PC-9 (cell line): ENCODE measurements at regions of chr11 and their contacts with region 1.

Region 1: DNA sequence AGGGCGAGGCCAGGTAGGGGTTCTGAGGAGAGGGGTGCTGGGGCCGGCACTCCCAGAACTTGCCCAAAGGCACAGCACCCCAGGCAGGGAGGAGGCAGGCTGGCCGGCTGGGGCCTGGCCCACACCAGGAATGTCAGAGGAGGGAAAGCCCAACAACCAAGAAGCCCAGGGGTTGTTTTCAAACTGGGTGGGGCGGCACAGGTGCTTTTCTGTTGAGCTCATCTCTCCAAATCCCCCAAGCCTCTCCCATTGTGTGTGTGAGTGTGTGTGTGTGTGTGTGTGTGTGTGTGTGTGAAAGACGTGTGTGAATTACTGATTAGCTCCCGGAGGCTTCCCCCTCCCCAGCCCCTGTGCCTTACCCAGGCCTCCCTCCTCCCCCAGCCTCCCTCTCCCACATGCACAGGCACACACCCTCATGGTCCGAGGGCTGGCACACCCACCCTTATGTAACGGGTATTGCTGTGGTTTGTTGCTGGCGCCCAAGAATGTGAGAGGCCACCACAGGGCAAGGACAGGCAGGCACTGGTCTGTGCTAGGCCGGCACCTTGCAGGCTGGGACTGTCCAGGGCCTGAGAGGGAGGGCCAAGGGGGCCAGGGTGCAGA is 15.9 kb downstream of the TRIM29 start:
- DNase-seq: peak; percentile 91 to 98
- H3K4me3 ChIP-seq: peak overlapping the region; percentile 47
- H3K27ac ChIP-seq: peak overlapping the region; percentile 98
- H3K4me1 ChIP-seq: peaks cover 61% of the 10 kb centered on the region
- H3K27me3 ChIP-seq: no peaks in the 10 kb centered on the region
- CTCF ChIP-seq: no peak

Region 2: DNA sequence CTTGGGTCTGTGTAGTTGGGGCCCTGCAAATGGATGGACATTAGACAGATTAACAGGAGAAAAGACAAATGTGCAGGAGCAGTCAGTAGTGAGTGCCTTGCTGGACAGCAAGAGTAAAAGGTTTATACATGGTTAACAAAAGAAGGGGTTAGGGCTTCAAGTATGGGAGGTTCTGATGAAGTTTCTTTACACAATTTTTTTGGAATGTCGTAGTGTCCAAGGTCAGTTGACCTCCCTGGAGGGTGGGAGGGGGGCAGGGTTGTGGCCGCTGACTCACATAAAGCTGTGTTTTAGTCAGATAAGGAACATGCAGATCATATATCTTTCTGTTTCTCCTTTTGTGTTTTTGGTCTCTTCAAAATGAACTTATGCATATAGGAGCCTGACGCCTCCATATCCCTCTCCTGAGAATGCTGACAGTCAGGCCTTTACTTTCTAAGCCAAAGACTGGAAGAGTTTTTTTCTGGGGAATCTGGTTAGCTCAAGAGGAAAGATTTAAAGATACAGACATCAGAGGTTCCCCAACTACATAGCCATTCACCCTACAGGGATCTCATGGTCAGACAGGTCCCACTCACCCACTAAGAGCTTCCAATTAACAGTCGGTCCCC is 527.2 kb before region 1 on chr11:
- CTCF ChIA-PET with region 1: no interaction called
- POLR2A ChIA-PET with region 1: no interaction called
- intact Hi-C with region 1: loop called (anchors 5 kb)
- DNase-seq: peak; percentile 63 to 86
- H3K4me3 ChIP-seq: no peak overlapping the region
- H3K27ac ChIP-seq: peak overlapping the region; percentile 78
- H3K4me1 ChIP-seq: peaks cover 57% of the 10 kb centered on the region
- H3K27me3 ChIP-seq: no peaks in the 10 kb centered on the region
- CTCF ChIP-seq: no peak

Region 3: GRCh38 chr11:119684361-119685110 is 437.4 kb before region 1 on chr11:
- CTCF ChIA-PET with region 1: no interaction called
- POLR2A ChIA-PET with region 1: no interaction called
- intact Hi-C with region 1: loop called (anchors 5 kb)
- DNase-seq: peak; percentile 60 to 83
- H3K4me3 ChIP-seq: peak overlapping the region; percentile 32; the same call in 1 of the 2 replicates
- H3K27ac ChIP-seq: peak overlapping the region; percentile 92
- H3K4me1 ChIP-seq: peaks cover 62% of the 10 kb centered on the region
- H3K27me3 ChIP-seq: no peaks in the 10 kb centered on the region
- CTCF ChIP-seq: no peak

Region 4: GRCh38 chr11:120210626-120211521 is 88.9 kb after region 1 on chr11 and contains the start of gene OAF:
- CTCF ChIA-PET with region 1: no interaction called
- POLR2A ChIA-PET with region 1: interaction called, 7 read pairs
- intact Hi-C with region 1: loop called (anchors 5 kb)
- DNase-seq: peak; percentile 77 to 85
- H3K4me3 ChIP-seq: peak within 1 kb of the TSS; percentile 99
- H3K27ac ChIP-seq: peak within 1 kb of the TSS; percentile 80
- H3K4me1 ChIP-seq: peaks cover 65% of the 10 kb centered on the region
- H3K27me3 ChIP-seq: no peaks in the 10 kb centered on the region
- CTCF ChIP-seq: peak; percentile 43; the same call in 1 of the 2 replicates
- total RNA-seq, gene OAF: 45.6 and 66.1 TPM in 2 replicates

Region 5: DNA sequence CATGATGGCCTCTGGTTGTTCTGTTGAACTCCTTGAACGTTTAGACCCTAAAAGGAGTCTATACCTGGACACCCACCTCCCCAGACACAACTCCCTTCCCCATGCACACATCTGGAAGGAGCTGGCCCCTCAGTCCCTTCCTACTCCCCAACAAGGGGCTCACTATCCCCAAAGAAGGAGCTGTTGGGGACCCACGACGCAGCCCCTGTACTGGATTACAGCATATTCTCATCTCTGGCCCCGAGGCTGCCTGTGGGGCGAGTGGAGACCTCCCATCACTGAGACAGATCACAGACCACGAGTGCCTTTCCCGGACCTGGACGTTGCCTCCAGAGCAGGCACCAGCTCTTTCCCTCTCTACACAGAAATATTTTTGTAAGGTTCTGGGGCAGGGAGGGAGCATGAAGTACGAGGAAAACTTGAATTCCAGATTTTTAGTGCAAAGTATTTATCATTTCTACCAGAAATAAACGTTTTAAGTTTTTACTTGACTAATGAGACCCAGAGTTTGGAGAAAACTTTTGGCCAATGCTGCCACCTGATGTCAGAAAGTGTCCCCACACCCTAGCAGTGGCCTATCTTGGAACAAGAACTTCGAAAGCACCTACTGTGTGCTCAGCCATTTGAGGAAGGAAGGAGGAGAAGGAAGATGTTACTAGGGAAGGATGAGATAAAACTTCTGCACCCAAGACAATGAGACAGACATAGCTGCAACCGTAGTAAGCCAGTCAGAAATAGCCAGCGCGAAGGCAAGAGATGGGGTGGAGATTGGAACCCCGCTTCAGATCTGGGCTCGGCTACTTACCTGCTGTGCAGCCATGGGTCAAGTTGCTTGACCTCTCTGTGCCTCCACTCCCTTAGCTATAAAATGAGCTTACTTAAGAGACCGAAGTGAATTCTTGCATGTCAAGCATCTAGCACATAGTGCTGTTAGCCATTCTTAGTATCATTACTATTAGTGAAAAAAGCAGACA is 107.8 kb after region 1 on chr11:
- CTCF ChIA-PET with region 1: no interaction called
- POLR2A ChIA-PET with region 1: interaction called, 3 read pairs
- intact Hi-C with region 1: loop called (anchors 5 kb)
- DNase-seq: no peak
- H3K4me3 ChIP-seq: no peak overlapping the region
- H3K27ac ChIP-seq: no peak overlapping the region
- H3K4me1 ChIP-seq: no peaks in the 10 kb centered on the region
- H3K27me3 ChIP-seq: no peaks in the 10 kb centered on the region
- CTCF ChIP-seq: peak; percentile 89